ENCODE measurements at regions of chr18 and their contacts with region 1.

Region 1: DNA sequence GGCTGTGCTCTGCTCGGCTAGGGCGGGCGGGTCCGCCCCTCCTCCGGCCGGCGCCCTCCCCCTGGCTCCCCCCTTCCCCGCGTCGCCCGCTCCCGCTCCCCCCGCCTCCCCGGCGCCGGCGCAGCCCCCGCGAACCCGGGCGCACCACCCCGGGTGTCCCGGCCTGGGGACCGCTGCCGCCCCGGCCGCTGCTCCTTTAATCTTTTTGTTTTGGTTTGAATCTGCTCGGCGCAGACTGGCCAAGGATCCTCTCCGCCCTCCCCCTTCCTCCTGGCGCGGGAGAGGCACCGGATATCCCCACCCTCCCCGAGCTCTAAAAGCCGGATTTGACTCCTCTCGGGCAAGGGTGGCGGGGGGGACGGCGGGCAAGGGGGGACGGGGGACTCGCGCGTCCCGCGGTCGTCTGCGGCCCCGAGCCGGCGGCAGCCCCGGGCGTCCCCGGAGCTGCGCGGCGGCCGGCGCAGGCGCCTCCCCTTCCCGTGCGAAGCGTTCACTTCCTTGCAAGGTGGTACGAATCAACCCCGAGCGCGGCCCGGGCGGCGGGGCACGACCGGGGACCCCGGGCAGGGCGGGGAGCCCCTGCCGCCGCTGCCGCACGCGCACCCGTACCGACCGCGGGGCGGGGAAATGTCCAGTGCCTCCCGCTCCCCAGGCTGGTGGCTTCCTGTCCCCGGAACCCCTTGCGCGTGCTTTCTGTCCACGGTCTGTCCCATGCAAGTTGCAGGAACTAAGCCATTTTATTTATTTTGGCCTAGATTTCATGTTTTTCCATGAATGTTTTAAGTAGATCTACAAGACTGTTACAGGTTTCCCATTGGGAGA is at the start of gene PTGR3:
- H3K4me3 Mint-ChIP-seq: peak within 1 kb of the TSS; percentile 89
- H3K27ac Mint-ChIP-seq: peak within 1 kb of the TSS; percentile 94
- H3K4me1 Mint-ChIP-seq: peaks cover 66% of the 10 kb centered on the region
- H3K27me3 Mint-ChIP-seq: peaks cover 31% of the 10 kb centered on the region

Region 2: DNA sequence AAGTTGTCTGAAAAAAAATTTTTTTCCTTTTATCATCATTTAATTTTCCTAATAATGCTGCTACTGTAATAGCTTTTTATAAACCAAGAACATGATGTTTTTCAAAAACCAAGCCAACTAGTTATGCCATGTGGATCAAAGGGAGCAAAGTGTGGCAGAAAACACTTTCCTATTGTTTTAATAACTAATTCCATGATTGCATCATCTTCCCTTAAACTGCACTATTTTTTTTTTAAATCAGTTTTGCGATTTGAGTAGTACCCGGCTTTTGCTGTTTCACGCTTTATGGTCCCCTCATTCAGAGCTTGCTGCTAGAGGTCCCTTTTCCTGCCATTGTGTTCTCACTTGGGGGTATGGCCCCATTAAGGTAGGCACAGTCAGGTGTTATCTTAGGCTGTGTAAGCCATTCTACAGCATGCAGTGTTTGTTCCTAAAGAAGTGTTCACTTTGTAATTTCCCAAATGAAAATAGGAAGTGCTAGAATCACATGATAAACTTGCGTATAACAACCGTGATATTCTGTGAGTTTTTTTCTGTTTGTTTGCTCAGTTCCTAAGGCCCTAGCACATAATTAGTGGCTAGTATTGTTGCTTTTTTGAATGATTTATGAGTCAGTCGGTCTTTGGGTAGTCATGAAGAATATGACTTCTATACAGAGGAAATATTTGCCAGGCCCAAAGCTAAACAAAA is 226.2 kb before region 1 on chr18:
- intact Hi-C with region 1: loop called (anchors 10 kb)
- H3K4me3 Mint-ChIP-seq: peak overlapping the region; percentile 6
- H3K27ac Mint-ChIP-seq: peak overlapping the region; percentile 95
- H3K4me1 Mint-ChIP-seq: peaks cover 18% of the 10 kb centered on the region
- H3K27me3 Mint-ChIP-seq: no peaks in the 10 kb centered on the region

Region 3: GRCh38 chr18:75066936-75067335 is 142.4 kb before region 1 on chr18:
- intact Hi-C with region 1: loop called (anchors 10 kb)
- H3K4me3 Mint-ChIP-seq: no peak overlapping the region
- H3K27ac Mint-ChIP-seq: peak overlapping the region; percentile 14
- H3K4me1 Mint-ChIP-seq: peaks cover 46% of the 10 kb centered on the region
- H3K27me3 Mint-ChIP-seq: no peaks in the 10 kb centered on the region

Region 4: GRCh38 chr18:75240433-75240832 is 31.1 kb after region 1 on chr18:
- intact Hi-C with region 1: loop called (anchors 2 kb)
- H3K4me3 Mint-ChIP-seq: no peak overlapping the region
- H3K27ac Mint-ChIP-seq: no peak overlapping the region
- H3K4me1 Mint-ChIP-seq: peaks cover 8% of the 10 kb centered on the region
- H3K27me3 Mint-ChIP-seq: no peaks in the 10 kb centered on the region

Region 5: DNA sequence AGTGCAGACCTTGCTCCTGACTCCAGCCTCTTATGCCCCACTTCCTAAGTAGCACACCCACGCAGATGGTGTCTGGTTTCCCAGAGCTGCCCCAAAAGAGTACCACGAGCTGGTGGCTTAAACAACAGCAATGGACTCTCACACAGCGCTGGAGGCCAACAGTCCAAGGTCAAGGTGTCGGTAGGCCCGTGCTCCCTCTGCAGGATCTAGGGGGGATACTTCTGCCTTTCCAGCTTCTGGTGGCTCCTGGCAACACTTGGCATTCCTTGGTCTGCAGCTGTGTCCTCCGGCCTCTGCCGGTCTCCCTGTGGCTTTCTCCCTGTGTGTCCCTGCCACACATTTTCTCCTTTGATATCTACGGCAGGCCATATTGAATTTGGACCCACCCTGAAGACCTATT is 100.2 kb after region 1 on chr18:
- intact Hi-C with region 1: loop called (anchors 2 kb)
- H3K4me3 Mint-ChIP-seq: no peak overlapping the region
- H3K27ac Mint-ChIP-seq: peak overlapping the region; percentile 12
- H3K4me1 Mint-ChIP-seq: peaks cover 49% of the 10 kb centered on the region
- H3K27me3 Mint-ChIP-seq: peaks cover 29% of the 10 kb centered on the region

Region 6: GRCh38 chr18:76822510-76823160 is 1613.3 kb after region 1 on chr18 and contains the start of gene ZNF236:
- intact Hi-C with region 1: loop called (anchors 5 kb)
- H3K4me3 Mint-ChIP-seq: peak within 1 kb of the TSS; percentile 87
- H3K27ac Mint-ChIP-seq: peak within 1 kb of the TSS; percentile 92
- H3K4me1 Mint-ChIP-seq: peaks cover 53% of the 10 kb centered on the region
- H3K27me3 Mint-ChIP-seq: no peaks in the 10 kb centered on the region